Panc1 (cell line): ENCODE measurements at regions of chr20 and their contacts with region 1.

Region 1: DNA sequence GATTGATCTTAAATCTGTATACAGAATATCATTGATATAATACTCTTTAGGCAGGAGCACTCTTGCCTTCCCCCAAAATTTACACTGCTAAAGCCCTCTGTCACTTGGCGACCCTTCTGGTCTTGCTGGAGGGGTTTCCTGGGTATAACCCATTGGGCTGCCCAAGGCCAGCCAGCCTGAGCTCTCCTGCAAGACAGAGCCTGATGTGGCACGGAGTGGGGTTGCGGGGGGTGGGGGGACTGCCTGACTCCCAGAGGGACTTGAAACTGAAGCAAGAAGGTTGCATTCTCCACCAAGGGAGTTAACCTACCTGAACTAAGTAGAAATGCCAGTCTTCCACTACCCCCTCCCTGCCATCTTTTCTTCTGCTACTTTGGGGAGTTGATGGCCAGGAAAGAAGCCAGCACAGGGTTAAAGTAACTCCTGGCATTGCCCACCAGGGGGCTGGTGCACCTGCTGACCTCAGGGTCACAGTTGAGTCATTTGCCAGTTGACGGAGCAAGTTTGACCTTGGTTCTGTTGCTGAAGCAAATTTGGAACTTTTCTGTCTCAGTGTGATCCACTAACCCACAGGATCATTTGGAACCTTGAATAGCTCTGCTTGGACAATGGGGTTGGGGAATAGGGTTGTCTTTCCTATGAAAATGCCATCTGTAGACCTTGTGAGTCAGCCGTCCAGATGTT is 79.4 kb downstream of the ASXL1 start:
- DNase-seq: no peak
- ATAC-seq: no peak
- H3K4me3 ChIP-seq: no peak overlapping the region
- H3K27ac ChIP-seq: no peak overlapping the region
- H3K4me1 ChIP-seq: no peaks in the 10 kb centered on the region
- H3K27me3 ChIP-seq: no peaks in the 10 kb centered on the region
- CTCF ChIP-seq: no peak

Region 2: GRCh38 chr20:32404017-32404416 is 33.5 kb before region 1 on chr20:
- CTCF ChIA-PET with region 1: no interaction called
- POLR2A ChIA-PET with region 1: no interaction called
- in situ Hi-C with region 1: no loop called
- intact Hi-C with region 1: no loop called
- DNase-seq: no peak
- ATAC-seq: no peak
- H3K4me3 ChIP-seq: no peak overlapping the region
- H3K27ac ChIP-seq: no peak overlapping the region
- H3K4me1 ChIP-seq: no peaks in the 10 kb centered on the region
- H3K27me3 ChIP-seq: no peaks in the 10 kb centered on the region
- CTCF ChIP-seq: no peak

Region 3: DNA sequence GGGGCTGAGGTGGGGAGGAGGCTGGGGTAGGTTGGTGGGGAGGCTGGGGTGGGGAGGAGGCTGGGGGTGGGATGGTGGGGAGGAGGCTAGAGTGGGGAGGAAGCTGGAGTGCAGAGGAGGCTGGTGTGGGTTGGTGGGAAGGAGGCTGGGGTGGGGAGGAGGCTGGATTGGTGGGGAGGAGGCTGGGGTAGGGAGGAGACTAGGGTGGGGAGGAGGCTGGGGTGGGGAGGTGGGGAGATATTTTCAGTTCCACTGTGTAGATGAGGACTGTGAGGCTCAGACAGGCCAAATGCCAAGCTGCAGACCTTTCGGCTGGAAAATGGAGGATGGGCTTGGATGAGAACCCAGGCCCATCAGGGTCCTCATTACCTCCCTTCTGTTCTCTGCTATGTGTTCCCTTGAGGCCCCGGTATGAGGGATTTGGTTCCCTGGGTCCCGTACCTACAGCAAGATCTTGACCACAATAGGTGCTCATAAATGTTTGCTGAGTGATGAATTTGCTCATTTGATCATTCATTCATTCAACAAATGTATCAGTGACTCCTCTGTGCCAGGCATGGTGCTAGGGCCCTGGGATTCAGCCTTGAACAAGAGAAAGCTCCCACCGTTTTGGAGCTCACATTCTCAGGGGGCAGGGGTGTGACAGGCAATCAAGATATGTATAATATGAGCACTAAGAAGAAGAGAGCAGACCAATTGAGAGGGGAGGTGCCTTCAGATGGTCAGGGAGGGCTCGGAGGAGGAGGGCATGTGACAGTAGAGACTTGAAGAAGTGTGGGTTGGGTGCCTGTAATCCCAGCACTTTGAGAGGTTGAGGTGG is 183.7 kb after region 1 on chr20:
- CTCF ChIA-PET with region 1: no interaction called
- POLR2A ChIA-PET with region 1: interaction called, 10 read pairs
- in situ Hi-C with region 1: no loop called
- intact Hi-C with region 1: no loop called
- DNase-seq: no peak
- ATAC-seq: peak; percentile 45
- H3K4me3 ChIP-seq: no peak overlapping the region
- H3K27ac ChIP-seq: no peak overlapping the region
- H3K4me1 ChIP-seq: peaks cover 3% of the 10 kb centered on the region
- H3K27me3 ChIP-seq: no peaks in the 10 kb centered on the region
- CTCF ChIP-seq: no peak